ENCODE measurements at regions of chr22 and their contacts with region 1.

Region 1: DNA sequence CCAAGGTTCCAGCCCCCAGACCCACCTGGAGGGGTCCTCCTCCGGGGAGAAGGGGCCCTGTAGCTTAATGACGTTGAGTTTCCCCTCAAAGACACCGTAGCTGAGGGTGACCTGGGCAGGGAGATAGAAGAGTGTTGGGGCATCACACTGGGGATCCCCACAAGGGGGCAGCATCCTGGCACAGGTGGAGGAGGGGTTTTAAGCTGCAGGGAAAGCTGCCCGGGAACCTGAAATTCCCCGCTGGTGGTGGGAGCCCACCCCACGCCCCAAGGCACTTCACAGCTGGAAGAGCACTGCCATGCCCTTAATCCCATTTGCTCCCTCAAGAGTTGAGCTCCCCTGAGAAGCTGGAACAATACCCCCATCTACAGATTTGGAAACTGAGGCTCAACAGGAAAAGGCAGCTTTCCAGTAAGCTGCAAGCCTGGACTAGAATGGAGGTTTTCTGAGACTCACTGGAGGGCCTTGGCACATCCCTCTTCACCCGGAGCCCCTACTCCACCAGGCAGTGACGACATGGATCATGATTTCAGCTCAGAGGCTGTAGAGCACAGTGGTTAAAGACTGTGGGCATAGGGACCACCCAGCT is 13.7 kb downstream of the MFNG start:
- DNase-seq: no peak
- ATAC-seq: peak; percentile 47
- H3K4me3 Mint-ChIP-seq: no peak overlapping the region
- H3K27ac Mint-ChIP-seq: no peak overlapping the region
- H3K4me1 Mint-ChIP-seq: peaks cover 5% of the 10 kb centered on the region
- H3K27me3 Mint-ChIP-seq: no peaks in the 10 kb centered on the region
- CTCF ChIP-seq: no peak

Region 2: GRCh38 chr22:37394341-37394740 is 78.2 kb before region 1 on chr22:
- CTCF ChIA-PET with region 1: no interaction called
- POLR2A ChIA-PET with region 1: no interaction called
- intact Hi-C with region 1: no loop called
- DNase-seq: no peak
- ATAC-seq: no peak
- H3K4me3 Mint-ChIP-seq: no peak overlapping the region
- H3K27ac Mint-ChIP-seq: no peak overlapping the region
- H3K4me1 Mint-ChIP-seq: no peaks in the 10 kb centered on the region
- H3K27me3 Mint-ChIP-seq: peaks cover 7% of the 10 kb centered on the region
- CTCF ChIP-seq: no peak

Region 3: GRCh38 chr22:37448511-37449127 is 23.9 kb before region 1 on chr22:
- CTCF ChIA-PET with region 1: no interaction called
- POLR2A ChIA-PET with region 1: no interaction called
- intact Hi-C with region 1: no loop called
- DNase-seq: no peak
- ATAC-seq: no peak
- H3K4me3 Mint-ChIP-seq: no peak overlapping the region
- H3K27ac Mint-ChIP-seq: no peak overlapping the region
- H3K4me1 Mint-ChIP-seq: peaks cover 2% of the 10 kb centered on the region
- H3K27me3 Mint-ChIP-seq: peaks cover 9% of the 10 kb centered on the region
- CTCF ChIP-seq: no peak

Region 4: DNA sequence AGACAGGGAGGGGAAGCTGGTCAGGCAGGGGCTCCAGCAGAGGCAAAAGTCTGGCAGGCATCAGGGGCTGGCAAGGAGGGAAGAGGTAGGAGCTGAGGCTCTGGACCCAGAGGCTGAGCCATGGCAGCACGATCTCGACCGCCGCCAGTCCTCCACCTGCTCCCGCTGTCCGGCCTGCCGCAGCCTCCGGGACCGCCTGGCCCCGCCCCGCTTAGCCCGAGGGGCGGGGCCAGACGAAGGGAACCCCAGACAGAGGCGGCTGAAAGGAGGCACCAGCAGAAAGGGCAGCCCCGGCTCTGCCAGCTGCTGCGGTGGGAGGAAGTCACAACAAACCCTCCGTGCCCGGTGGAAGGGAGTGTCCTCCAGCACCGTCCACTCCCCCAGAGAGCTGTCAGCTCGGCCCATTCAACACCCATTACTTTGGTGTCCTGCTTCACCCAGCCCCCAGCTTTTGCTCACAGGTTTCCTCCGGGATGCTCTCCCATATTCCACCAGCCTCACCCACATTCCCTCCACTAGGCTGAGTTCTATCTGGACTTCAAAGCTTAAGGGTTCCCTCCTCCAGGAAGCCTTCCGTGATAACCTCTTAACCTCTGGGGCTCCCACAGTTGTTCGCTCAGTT is 13.8 kb after region 1 on chr22 and contains the start of gene MFNG:
- CTCF ChIA-PET with region 1: interaction called, 26 read pairs
- POLR2A ChIA-PET with region 1: interaction called, 9 read pairs
- intact Hi-C with region 1: no loop called
- DNase-seq: peak; percentile 73
- ATAC-seq: peak; percentile 79
- H3K4me3 Mint-ChIP-seq: peak within 1 kb of the TSS; percentile 93
- H3K27ac Mint-ChIP-seq: peak within 1 kb of the TSS; percentile 94
- H3K4me1 Mint-ChIP-seq: peaks cover 46% of the 10 kb centered on the region
- H3K27me3 Mint-ChIP-seq: no peaks in the 10 kb centered on the region
- CTCF ChIP-seq: no peak
- total RNA-seq, gene MFNG: 86.1 and 90.6 TPM in 2 replicates

Region 5: GRCh38 chr22:37498289-37498909 is 25.9 kb after region 1 on chr22:
- CTCF ChIA-PET with region 1: interaction called, 28 read pairs
- POLR2A ChIA-PET with region 1: no interaction called
- intact Hi-C with region 1: loop called (anchors 1 kb)
- DNase-seq: peak; percentile 64
- ATAC-seq: peak; percentile 100
- H3K4me3 Mint-ChIP-seq: no peak overlapping the region
- H3K27ac Mint-ChIP-seq: no peak overlapping the region
- H3K4me1 Mint-ChIP-seq: peaks cover 6% of the 10 kb centered on the region
- H3K27me3 Mint-ChIP-seq: peaks cover 26% of the 10 kb centered on the region
- CTCF ChIP-seq: no peak

Measured in activated B cell treated with CpG ODN at 0.5 μM for 24 hours (primary cell).